Activated CD4-positive, alpha-beta T cell treated with anti-CD3 and anti-CD28 coated beads, Interleukin-2, amount 10 ng/mL, durations not matched to agents 7 days and 5 days (primary cell): ENCODE measurements at regions of chr11 and their contacts with region 1.

Region 1: DNA sequence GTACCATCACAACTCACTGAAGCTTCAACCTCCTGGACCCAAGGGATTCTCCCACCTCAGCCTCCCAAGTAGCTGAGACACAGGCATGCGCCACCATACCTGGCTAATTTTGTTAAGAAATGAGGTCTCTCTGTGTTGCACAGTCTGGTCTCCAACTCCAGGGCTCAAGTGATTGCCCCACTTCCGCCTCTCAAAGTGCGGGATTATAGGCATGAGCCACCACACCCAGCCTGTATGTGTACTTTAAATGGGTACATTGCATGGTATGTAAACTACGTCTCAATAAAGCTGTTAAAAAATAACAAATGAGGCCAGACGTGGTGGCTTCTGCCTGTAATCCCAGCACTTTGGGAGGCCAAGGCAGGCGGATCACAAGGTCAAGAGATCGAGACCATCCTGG is 36.2 kb upstream of the DDX6 start:
- DNase-seq: no peak
- H3K4me3 Mint-ChIP-seq: no peak overlapping the region
- H3K27ac Mint-ChIP-seq: no peak overlapping the region
- H3K4me1 Mint-ChIP-seq: peaks cover 4% of the 10 kb centered on the region
- H3K27me3 Mint-ChIP-seq: no peaks in the 10 kb centered on the region

Region 2: GRCh38 chr11:118699506-118700220 is 127.5 kb before region 1 on chr11:
- CTCF ChIA-PET with region 1: no interaction called
- POLR2A ChIA-PET with region 1: no interaction called
- DNase-seq: peak; percentile 80
- H3K4me3 Mint-ChIP-seq: peak overlapping the region; percentile 37
- H3K27ac Mint-ChIP-seq: peak overlapping the region; percentile 88
- H3K4me1 Mint-ChIP-seq: peaks cover 35% of the 10 kb centered on the region
- H3K27me3 Mint-ChIP-seq: no peaks in the 10 kb centered on the region

Region 3: DNA sequence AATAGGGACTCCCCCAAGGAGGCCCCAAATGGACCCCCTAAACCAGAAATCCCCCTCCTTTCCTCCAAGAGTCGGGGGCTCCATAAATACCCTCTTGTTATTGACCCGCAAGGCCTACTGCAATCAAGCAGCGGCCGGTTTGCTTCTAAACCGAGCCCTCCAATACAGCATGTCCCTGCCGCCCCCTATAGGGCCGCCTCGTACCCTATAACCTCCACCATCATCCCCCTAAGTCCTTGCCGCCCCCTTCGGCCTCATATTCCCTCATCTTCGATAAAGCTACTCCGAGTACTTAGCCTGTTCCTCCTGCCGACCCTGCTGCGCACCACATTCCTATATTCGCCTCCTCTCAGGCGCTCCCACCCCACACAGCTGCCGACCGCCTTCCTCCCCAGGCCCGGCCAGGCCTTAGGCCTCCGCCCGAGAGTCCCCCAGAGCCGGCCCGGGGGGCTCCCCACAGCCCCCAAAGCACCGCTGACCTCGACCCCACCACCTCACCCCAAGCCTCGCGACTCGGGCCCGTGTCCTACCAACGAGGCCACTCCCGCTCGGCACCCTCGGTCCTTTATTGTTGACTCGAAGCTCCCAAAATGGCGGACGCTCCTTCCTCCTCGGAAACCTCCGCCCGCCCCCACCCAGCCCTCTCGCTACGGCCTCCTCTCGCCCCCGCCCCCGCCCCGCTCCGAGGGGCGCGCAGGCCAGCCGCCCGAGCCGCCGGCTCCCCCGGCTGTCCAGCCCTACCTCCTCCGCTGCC is 36.6 kb before region 1 on chr11:
- CTCF ChIA-PET with region 1: no interaction called
- POLR2A ChIA-PET with region 1: no interaction called
- DNase-seq: peak; percentile 64
- H3K4me3 Mint-ChIP-seq: peak overlapping the region; percentile 99
- H3K27ac Mint-ChIP-seq: peak overlapping the region; percentile 100
- H3K4me1 Mint-ChIP-seq: peaks cover 36% of the 10 kb centered on the region
- H3K27me3 Mint-ChIP-seq: no peaks in the 10 kb centered on the region

Region 4: DNA sequence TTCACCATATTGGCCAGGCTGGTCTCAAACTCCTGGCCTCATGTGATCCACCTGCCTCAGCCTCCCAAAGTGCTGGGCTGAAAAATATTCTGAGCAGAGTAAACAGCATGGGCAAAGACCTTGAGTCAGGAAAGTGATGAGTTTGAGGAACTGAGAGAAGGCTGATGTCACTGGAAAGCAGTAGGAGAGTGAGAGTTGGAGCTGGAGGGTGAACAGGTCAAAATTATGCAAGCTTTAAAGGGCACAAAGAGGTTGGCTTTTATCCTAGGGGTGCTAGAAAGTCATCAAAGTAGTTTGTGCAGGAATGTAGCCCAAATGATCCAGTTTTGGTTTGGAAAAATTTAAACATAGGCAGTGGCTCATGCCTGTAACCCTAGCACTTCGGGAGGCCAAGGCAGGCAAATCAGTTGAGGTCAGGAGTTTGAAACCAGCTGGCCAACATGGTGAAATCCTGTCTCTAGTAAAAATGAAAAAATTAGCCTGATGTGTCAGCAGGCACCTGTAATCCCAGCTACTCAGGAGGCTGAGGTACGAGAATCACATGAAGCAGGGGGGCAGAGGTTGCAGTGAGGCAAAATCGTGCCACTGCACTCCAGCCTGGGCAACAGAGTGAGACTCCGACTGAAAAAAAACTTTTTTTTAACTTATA is 11.9 kb after region 1 on chr11:
- CTCF ChIA-PET with region 1: interaction called, 10 read pairs
- POLR2A ChIA-PET with region 1: no interaction called
- DNase-seq: no peak
- H3K4me3 Mint-ChIP-seq: no peak overlapping the region
- H3K27ac Mint-ChIP-seq: peak overlapping the region; percentile 1
- H3K4me1 Mint-ChIP-seq: peaks cover 37% of the 10 kb centered on the region
- H3K27me3 Mint-ChIP-seq: no peaks in the 10 kb centered on the region

Region 5: GRCh38 chr11:118851970-118852369 is 24.9 kb after region 1 on chr11:
- CTCF ChIA-PET with region 1: no interaction called
- POLR2A ChIA-PET with region 1: no interaction called
- DNase-seq: no peak
- H3K4me3 Mint-ChIP-seq: no peak overlapping the region
- H3K27ac Mint-ChIP-seq: no peak overlapping the region
- H3K4me1 Mint-ChIP-seq: peaks cover 4% of the 10 kb centered on the region
- H3K27me3 Mint-ChIP-seq: no peaks in the 10 kb centered on the region

Region 6: GRCh38 chr11:119041821-119042514 is 214.8 kb after region 1 on chr11:
- CTCF ChIA-PET with region 1: no interaction called
- POLR2A ChIA-PET with region 1: no interaction called
- DNase-seq: no peak
- H3K4me3 Mint-ChIP-seq: no peak overlapping the region
- H3K27ac Mint-ChIP-seq: peak overlapping the region; percentile 27
- H3K4me1 Mint-ChIP-seq: peaks cover 4% of the 10 kb centered on the region
- H3K27me3 Mint-ChIP-seq: no peaks in the 10 kb centered on the region